ENCODE measurements at regions of chr9 and their contacts with region 1.

Region 1: DNA sequence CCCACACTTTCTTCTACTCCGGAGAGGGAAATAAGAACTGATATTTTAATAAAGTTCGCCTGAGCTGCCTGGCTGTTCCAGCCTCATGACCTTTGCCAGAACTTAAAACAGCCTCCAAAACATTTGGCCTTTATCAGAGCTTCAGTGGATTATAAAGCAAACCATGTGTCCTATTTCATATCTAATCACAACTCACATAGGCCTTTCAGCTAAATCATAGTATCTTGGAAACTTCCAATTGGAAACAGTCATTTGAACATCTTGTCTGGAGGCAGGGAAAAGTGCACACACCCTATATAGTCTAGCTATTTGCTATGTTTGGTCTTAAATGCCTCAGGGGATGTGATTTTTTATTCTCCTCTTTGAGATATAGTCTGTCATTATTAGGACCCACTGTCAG is 46.0 kb upstream of the FREM1 start:
- DNase-seq: no peak
- H3K4me3 ChIP-seq: no peak overlapping the region
- H3K27ac ChIP-seq: no peak overlapping the region
- H3K4me1 ChIP-seq: no peaks in the 10 kb centered on the region
- H3K27me3 ChIP-seq: no peaks in the 10 kb centered on the region
- CTCF ChIP-seq: no peak

Region 2: GRCh38 chr9:13033959-13034693 is 1922.1 kb before region 1 on chr9:
- CTCF ChIA-PET with region 1: no interaction called
- POLR2A ChIA-PET with region 1: no interaction called
- intact Hi-C with region 1: no loop called
- DNase-seq: peak; percentile 37 to 57
- H3K4me3 ChIP-seq: peak overlapping the region; percentile 37; the same call in 1 of the 2 replicates
- H3K27ac ChIP-seq: no peak overlapping the region
- H3K4me1 ChIP-seq: no peaks in the 10 kb centered on the region
- H3K27me3 ChIP-seq: no peaks in the 10 kb centered on the region
- CTCF ChIP-seq: peak; percentile 75

Region 3: DNA sequence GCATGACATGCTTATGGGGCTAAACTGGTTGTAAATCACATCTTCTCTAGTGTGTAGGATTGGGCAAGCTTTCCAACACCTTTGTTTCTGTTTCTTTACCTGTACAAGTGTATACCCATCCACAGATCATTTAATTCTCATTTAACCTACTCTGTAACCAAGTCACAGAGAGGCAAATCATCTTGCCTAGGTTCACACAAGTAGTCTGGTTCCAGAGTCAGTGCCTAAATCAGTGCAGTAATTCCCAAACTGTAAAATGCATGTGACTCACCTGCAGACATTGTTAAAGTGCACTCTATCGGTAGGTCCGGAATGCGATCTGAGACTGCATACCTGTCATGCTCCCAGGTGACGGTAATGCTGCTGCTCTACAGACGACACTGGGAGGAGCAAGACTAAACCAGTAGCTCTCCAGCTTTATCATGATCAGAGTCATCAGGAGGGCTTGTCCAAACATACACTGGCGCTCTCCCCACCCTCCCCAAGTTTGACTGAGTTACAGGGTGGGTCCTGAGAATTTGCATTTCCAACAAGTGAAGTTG is 62.0 kb after region 1 on chr9:
- CTCF ChIA-PET with region 1: no interaction called
- POLR2A ChIA-PET with region 1: interaction called, 12 read pairs
- intact Hi-C with region 1: no loop called
- DNase-seq: no peak
- H3K4me3 ChIP-seq: no peak overlapping the region
- H3K27ac ChIP-seq: no peak overlapping the region
- H3K4me1 ChIP-seq: no peaks in the 10 kb centered on the region
- H3K27me3 ChIP-seq: no peaks in the 10 kb centered on the region
- CTCF ChIP-seq: no peak

Measured in PC-9 (cell line).